Ascending aorta (tissue), 2 donors: ENCODE measurements at regions of chr2 and their contacts with region 1.

Region 1: GRCh38 chr2:105037572-105038382 is at the start of gene MRPS9:
- DNase-seq: peak; percentile 95 to 98
- H3K4me3 ChIP-seq: peak within 1 kb of the TSS; percentile 85 to 89
- H3K27ac ChIP-seq: peak within 1 kb of the TSS; percentile 73 to 82
- H3K4me1 ChIP-seq: peaks cover 0 to 3% of the 10 kb centered on the region in 2 donors
- H3K27me3 ChIP-seq: no peaks in the 10 kb centered on the region
- CTCF ChIP-seq: no peak
- total RNA-seq, gene MRPS9: 18.7 TPM

Region 2: DNA sequence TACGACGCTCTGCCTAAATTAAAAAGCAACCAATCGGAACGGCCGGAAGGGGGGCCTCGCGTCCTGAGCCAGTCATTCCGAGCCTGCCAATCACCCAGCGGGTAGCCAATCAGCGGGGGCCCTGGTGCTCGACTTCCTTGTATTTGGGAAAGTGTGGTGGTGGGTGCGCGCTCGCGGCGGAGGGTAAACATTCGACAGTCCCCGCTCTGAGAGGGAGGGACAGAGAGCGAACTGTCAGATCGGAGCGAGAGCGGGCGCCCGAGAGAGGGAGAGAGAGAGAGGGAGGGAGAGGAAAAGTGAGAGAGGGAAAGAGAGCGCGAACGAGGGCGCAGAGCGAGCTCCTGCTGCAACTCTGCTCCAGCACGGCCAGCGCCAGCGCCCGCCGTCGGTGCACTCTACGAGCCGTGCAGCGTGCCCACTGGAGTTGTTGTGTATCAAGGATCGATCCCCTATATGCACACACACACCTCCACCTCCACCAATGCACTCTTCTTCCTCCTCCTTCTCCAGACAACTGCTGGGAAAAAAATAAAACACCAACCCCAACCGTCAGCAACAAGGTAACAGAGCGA is 183.8 kb before region 1 on chr2 and contains the start of gene POU3F3:
- intact Hi-C with region 1: loop called (anchors 2 kb)
- DNase-seq: peak; percentile 60 to 92
- H3K4me3 ChIP-seq: peak within 1 kb of the TSS; percentile 53 to 73
- H3K27ac ChIP-seq: peak within 1 kb of the TSS; percentile 37 to 61
- H3K4me1 ChIP-seq: peaks cover 0 to 8% of the 10 kb centered on the region in 2 donors
- H3K27me3 ChIP-seq: peaks cover 19% of the 10 kb centered on the region
- CTCF ChIP-seq: no peak
- total RNA-seq, gene POU3F3: 0.21 TPM

Region 3: DNA sequence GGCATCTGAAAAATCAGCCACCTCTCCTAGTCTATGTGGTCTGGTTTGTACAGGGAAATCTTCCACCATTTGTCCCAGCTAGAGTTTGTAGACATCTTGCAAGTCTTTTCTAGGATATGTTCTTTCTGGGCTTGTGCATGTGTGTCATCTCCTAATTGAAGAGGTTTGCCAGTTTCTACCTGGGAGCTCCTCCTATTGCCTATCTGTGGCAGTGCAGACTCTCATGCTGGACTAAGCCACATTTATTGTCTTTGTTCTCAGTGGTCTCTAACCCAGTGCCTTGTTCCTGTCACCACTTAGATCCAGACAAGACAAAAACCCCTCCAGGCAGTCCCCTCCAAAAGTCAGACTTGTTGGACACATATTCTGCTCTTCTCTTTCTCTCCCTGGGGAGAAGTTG is 71.9 kb before region 1 on chr2:
- intact Hi-C with region 1: no loop called
- DNase-seq: no peak
- H3K4me3 ChIP-seq: no peak overlapping the region
- H3K27ac ChIP-seq: no peak overlapping the region
- H3K4me1 ChIP-seq: no peaks in the 10 kb centered on the region
- H3K27me3 ChIP-seq: no peaks in the 10 kb centered on the region
- CTCF ChIP-seq: no peak

Region 4: GRCh38 chr2:105337124-105338019 is 299.6 kb after region 1 on chr2 and contains the start of gene C2orf49:
- intact Hi-C with region 1: loop called (anchors 5 kb)
- DNase-seq: peak in 1 of 2 donors; percentile 91
- H3K4me3 ChIP-seq: peak within 1 kb of the TSS; percentile 69 to 73
- H3K27ac ChIP-seq: peak within 1 kb of the TSS; percentile 94 to 96
- H3K4me1 ChIP-seq: peaks cover 0 to 13% of the 10 kb centered on the region in 2 donors
- H3K27me3 ChIP-seq: no peaks in the 10 kb centered on the region
- CTCF ChIP-seq: no peak
- total RNA-seq, gene C2orf49: 12.2 TPM